Prostate gland (tissue), 2 donors: ENCODE measurements at regions of chr9 and their contacts with region 1.

Region 1: GRCh38 chr9:13165236-13165945 is 114.1 kb downstream of the MPDZ start:
- DNase-seq: no peak
- H3K4me3 ChIP-seq: no peak overlapping the region
- H3K27ac ChIP-seq: no peak overlapping the region
- H3K4me1 ChIP-seq: no peaks in the 10 kb centered on the region
- H3K27me3 ChIP-seq: no peaks in the 10 kb centered on the region
- CTCF ChIP-seq: no peak
- POLR2A ChIP-seq: no peak

Region 2: DNA sequence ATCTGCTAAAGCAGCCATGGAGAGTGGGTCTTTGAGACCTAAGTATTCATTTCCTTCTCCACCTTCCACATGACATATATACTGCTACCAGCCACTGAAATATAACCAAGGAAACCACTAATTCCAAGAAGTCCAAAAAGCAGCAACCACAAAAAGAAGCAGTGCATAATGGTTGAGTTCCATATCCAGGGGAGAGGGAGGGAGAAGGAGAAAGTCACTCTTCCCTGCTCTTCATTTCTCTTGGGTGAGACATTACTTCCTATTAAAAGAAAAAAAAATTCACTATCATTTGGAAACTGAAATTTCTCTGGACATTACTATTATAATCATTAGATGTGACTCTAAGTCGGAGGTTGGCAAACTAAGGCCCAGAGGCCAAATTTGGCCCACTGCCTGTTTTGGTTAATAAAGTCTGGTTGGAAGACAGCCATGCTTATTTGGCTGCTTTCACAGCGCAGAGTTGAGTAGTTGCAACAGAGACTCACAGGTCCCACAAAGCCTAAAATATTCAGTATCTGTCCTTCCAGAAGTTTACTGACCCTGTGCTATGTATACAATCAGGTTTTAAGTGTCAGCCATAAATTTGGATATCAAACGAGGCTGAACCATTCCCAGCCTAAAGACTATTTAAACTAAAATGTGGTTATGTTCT is 54.5 kb before region 1 on chr9:
- intact Hi-C with region 1: loop called (anchors 10 kb)
- DNase-seq: peak; percentile 35
- H3K4me3 ChIP-seq: no peak overlapping the region
- H3K27ac ChIP-seq: no peak overlapping the region
- H3K4me1 ChIP-seq: no peaks in the 10 kb centered on the region
- H3K27me3 ChIP-seq: no peaks in the 10 kb centered on the region
- CTCF ChIP-seq: no peak
- POLR2A ChIP-seq: no peak